ENCODE measurements at regions of chr1 and their contacts with region 1.

Region 1: GRCh38 chr1:110780600-110781484 is 92.1 kb upstream of the CD53 start:
- DNase-seq: peak; percentile 74
- ATAC-seq: peak; percentile 84
- H3K4me3 ChIP-seq: no peak overlapping the region
- H3K27ac ChIP-seq: no peak overlapping the region
- H3K4me1 ChIP-seq: peaks cover 0 to 4% of the 10 kb centered on the region in 2 experiments; a peak in 1 of 4 replicates
- H3K27me3 ChIP-seq: peaks cover 42% of the 10 kb centered on the region
- CTCF ChIP-seq: peak; percentile 81 to 82 (median 82); a peak in 5 of 6 replicates
- POLR2A ChIP-seq: no peak
- RAD21 ChIP-seq: peak; percentile 80

Region 2: DNA sequence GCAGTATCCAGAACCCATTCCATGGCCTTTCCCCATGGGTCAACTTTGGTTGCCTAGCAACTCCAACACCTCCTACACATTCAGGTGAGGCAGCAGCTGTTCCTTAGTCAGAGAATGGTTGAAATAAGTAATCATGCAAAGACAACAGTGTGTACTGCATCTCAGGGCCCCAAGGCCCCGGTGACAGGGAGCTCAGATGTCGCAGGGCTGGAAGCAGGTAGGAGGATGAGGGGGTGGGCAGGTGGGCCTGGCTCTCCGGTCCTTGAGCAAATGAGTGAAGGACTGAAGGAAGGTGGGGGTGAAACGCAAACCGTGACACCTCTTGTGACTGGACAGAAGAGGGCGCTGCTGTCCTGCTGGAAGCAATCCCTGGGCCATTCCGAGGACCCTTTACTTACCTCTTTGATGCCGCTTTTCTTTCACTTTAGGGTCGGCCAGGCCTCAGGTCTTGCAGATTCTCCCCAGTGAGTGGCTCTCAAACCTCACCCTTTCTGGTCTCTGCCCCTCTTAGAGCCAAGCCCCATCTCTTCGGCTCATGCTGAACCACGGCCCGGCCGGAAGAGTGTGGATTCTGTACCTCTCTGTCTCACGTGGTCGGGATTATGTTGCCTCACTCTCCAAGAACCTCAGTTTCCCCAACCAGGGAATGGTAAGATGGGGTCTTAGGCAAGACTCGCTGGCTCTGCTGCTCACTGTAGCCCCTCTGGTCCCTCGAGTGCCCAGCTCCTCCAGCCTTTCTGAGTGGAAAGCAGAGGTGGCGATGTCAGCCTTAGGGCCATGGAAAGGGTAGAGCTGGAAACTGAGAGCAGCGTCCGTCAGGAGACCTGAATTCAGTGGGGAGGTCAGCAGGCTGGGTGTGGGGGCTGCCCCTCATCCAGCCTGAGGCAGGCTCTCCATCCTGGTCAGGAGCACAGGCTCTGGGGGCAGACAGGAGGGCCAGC is 256.3 kb before region 1 on chr1:
- CTCF ChIA-PET with region 1: interaction called, 13 read pairs
- POLR2A ChIA-PET with region 1: no interaction called
- RAD21 ChIA-PET with region 1: no interaction called
- intact Hi-C with region 1: loop called (anchors 1 kb)
- DNase-seq: peak; percentile 27
- ATAC-seq: peak; percentile 96
- H3K4me3 ChIP-seq: peak overlapping the region in 1 of 2 experiments; percentile 10; a peak in 1 of 4 replicates
- H3K27ac ChIP-seq: no peak overlapping the region
- H3K4me1 ChIP-seq: peaks cover 0 to 8% of the 10 kb centered on the region in 2 experiments; a peak in 1 of 4 replicates
- H3K27me3 ChIP-seq: peaks cover 59% of the 10 kb centered on the region; the same call in 1 of the 2 replicates
- CTCF ChIP-seq: peak; percentile 77 to 88 (median 84)
- POLR2A ChIP-seq: no peak
- RAD21 ChIP-seq: peak; percentile 87

Region 3: DNA sequence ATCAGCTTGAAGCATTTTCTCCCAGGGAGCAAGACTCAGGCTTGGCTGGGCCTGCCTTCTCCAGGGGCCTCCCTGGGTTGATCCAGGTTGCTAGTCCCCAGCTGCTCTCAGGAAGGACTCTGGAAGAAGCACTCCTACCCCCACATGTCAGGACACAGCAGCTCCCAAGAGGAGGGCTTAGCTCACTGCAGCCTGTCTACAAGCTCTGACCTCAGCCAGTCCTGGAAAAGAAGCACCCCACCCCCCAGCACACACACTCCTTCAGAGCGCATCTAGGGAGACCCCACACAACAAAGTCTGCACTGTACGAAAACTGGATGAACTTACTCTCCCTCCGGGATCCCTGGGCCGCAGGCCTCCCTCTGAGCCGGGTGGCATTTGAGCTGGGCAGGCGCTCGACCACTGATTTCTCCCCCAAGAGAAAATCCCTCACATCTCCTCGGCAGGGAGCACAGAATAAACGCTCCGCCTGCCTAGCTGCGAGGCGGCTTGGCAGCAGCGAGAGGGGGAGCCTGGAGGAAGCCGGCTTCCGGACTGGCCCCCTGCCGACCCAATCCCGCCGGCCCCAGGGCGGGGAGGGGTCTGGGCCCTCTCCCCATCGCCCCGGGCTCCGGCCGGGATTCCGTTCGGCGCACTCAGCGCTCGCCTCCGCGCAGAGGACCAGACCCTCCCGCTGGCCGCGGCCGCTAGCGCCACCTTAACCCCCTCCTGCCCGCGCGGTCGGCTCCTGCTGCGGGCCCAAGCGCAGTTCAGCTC is 174.8 kb before region 1 on chr1 and contains the start of gene KCNA2:
- CTCF ChIA-PET with region 1: no interaction called
- POLR2A ChIA-PET with region 1: no interaction called
- RAD21 ChIA-PET with region 1: no interaction called
- intact Hi-C with region 1: no loop called
- DNase-seq: no peak
- ATAC-seq: no peak
- H3K4me3 ChIP-seq: no peak within 1 kb of the TSS
- H3K27ac ChIP-seq: no peak within 1 kb of the TSS
- H3K4me1 ChIP-seq: no peaks in the 10 kb centered on the region
- H3K27me3 ChIP-seq: peaks cover 3% of the 10 kb centered on the region
- CTCF ChIP-seq: no peak
- POLR2A ChIP-seq: no peak
- RAD21 ChIP-seq: no peak
- total RNA-seq, gene KCNA2: not detected

Region 4: GRCh38 chr1:110619412-110620249 is 161.2 kb before region 1 on chr1:
- CTCF ChIA-PET with region 1: interaction called, 52 read pairs
- POLR2A ChIA-PET with region 1: no interaction called
- RAD21 ChIA-PET with region 1: interaction called in 1 of 2 experiments, 4 read pairs
- intact Hi-C with region 1: loop called (anchors 1 kb)
- DNase-seq: peak; percentile 63
- ATAC-seq: peak; percentile 88
- H3K4me3 ChIP-seq: no peak overlapping the region
- H3K27ac ChIP-seq: no peak overlapping the region
- H3K4me1 ChIP-seq: peaks cover 8 to 22% of the 10 kb centered on the region in 2 experiments
- H3K27me3 ChIP-seq: peaks cover 22% of the 10 kb centered on the region
- CTCF ChIP-seq: peak; percentile 80 to 98 (median 93); a peak in 5 of 6 replicates
- POLR2A ChIP-seq: no peak
- RAD21 ChIP-seq: peak; percentile 76

Region 5: GRCh38 chr1:110630839-110631663 is 149.8 kb before region 1 on chr1:
- CTCF ChIA-PET with region 1: no interaction called
- POLR2A ChIA-PET with region 1: no interaction called
- RAD21 ChIA-PET with region 1: no interaction called
- intact Hi-C with region 1: loop called (anchors 1 kb)
- DNase-seq: peak; percentile 43
- ATAC-seq: peak; percentile 100
- H3K4me3 ChIP-seq: no peak overlapping the region
- H3K27ac ChIP-seq: no peak overlapping the region
- H3K4me1 ChIP-seq: 0 out of 4 replicates have a peak, but pooled peaks cover 0 to 3% of the 10 kb centered on the region in 2 experiments
- H3K27me3 ChIP-seq: peaks cover 24% of the 10 kb centered on the region
- CTCF ChIP-seq: peak; percentile 82 to 88 (median 85)
- POLR2A ChIP-seq: no peak
- RAD21 ChIP-seq: peak; percentile 67

Region 6: GRCh38 chr1:110766025-110766647 is 14.7 kb before region 1 on chr1:
- CTCF ChIA-PET with region 1: interaction called, 52 read pairs
- POLR2A ChIA-PET with region 1: no interaction called
- RAD21 ChIA-PET with region 1: no interaction called
- intact Hi-C with region 1: no loop called
- DNase-seq: peak; percentile 10
- ATAC-seq: peak; percentile 68; the same call in 1 of the 2 replicates
- H3K4me3 ChIP-seq: no peak overlapping the region
- H3K27ac ChIP-seq: no peak overlapping the region
- H3K4me1 ChIP-seq: no peaks in the 10 kb centered on the region
- H3K27me3 ChIP-seq: peaks cover 67% of the 10 kb centered on the region
- CTCF ChIP-seq: peak; percentile 61 to 82 (median 75); a peak in 5 of 6 replicates
- POLR2A ChIP-seq: no peak
- RAD21 ChIP-seq: peak; percentile 73

Region 7: DNA sequence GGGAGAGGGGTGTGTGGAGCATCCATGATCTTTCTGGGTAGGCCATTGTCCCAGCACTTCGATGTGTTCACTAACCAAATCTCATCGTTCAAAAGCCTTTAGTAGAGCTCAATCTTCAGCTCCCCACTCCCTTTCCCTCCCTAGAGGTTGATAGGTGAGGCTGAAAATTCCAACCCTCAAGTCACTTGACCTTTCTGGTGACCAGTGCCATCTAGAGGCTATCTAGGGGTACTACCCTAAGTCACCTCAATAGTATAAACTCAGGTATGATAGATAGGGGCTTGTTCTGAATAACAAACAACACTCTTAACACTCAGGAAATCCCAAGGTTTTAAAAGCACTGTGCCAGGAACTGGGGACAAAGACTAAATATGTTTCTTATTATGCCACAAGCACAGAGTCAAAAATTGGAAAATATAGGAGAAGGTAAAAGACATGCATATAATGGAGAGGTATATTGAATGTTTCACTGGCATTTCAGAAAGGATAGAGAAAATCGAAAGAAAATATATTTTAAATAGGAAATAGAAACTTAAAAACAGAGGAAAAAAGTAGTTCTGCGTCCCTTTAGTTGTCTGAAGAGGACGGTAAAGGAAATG is 49.2 kb after region 1 on chr1:
- CTCF ChIA-PET with region 1: interaction called, 3 read pairs
- POLR2A ChIA-PET with region 1: no interaction called
- RAD21 ChIA-PET with region 1: no interaction called
- intact Hi-C with region 1: loop called (anchors 2 kb)
- DNase-seq: peak; percentile 45
- ATAC-seq: peak; percentile 96
- H3K4me3 ChIP-seq: no peak overlapping the region
- H3K27ac ChIP-seq: no peak overlapping the region
- H3K4me1 ChIP-seq: no peaks in the 10 kb centered on the region
- H3K27me3 ChIP-seq: peaks cover 47% of the 10 kb centered on the region
- CTCF ChIP-seq: peak; percentile 37 to 90 (median 87); a peak in 5 of 6 replicates
- POLR2A ChIP-seq: no peak
- RAD21 ChIP-seq: peak; percentile 45

Region 8: DNA sequence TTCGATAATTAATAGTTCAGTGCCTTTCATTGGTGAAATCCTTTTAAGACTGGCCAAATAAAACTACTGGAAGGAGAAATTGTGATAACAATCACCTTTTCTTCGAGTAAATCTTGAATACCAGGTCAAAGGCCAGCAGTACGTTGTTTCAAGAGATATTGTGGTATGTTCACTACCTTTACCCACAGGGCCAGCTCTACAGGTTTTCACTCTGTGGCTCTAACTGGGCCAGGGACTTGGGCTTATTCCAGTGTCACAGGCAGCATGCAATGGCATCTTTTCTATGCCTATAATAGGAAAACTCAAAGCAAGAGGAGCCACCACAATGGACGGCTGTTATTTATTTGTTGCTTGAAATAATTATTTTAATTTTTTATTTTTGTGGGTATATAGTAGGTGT is 209.7 kb after region 1 on chr1:
- CTCF ChIA-PET with region 1: interaction called, 10 read pairs
- POLR2A ChIA-PET with region 1: interaction called, 3 read pairs
- RAD21 ChIA-PET with region 1: no interaction called
- intact Hi-C with region 1: loop called (anchors 2 kb)
- DNase-seq: no peak
- ATAC-seq: no peak
- H3K4me3 ChIP-seq: no peak overlapping the region
- H3K27ac ChIP-seq: no peak overlapping the region
- H3K4me1 ChIP-seq: no peaks in the 10 kb centered on the region
- H3K27me3 ChIP-seq: peaks cover 23% of the 10 kb centered on the region
- CTCF ChIP-seq: no peak
- POLR2A ChIP-seq: no peak
- RAD21 ChIP-seq: no peak

Region 9: DNA sequence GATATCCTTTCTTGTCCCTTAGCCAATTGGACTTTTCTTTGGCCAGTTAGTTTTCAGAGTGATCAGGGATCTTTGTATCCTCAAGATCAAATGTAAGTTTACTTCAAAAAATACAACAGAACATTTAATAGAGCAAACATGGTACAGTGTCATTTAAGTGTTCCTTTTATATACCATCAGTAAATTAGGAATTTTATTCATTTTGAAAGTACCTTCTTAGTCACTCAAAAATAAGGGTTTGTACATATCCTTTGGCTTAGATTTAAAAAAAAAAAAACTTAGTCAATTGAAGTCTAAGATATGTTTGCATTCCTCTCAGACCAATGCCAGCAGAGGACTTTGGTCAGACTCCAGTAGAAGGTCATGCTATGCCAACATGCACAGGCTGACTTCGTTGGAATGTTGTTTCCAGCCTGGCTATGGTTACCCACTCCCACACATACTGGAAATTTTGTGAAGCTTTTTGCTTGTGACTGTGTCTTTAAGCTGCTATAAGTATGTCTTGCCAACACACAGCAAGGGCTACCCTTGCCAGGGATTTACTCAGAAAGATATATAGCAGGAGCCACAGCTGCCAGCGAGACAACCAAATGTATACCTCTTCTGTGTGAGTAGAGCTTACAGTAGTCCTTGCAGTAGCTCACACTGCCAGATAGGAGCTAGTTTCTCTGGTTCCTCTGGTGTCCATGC is 264.3 kb after region 1 on chr1:
- CTCF ChIA-PET with region 1: no interaction called
- POLR2A ChIA-PET with region 1: no interaction called
- RAD21 ChIA-PET with region 1: no interaction called
- intact Hi-C with region 1: no loop called
- DNase-seq: no peak
- ATAC-seq: no peak
- H3K4me3 ChIP-seq: no peak overlapping the region
- H3K27ac ChIP-seq: no peak overlapping the region
- H3K4me1 ChIP-seq: no peaks in the 10 kb centered on the region
- H3K27me3 ChIP-seq: 0 out of 2 replicates have a peak, but pooled peaks cover 8% of the 10 kb centered on the region
- CTCF ChIP-seq: no peak
- POLR2A ChIP-seq: no peak
- RAD21 ChIP-seq: no peak

Measured in HCT116 (cell line).